Activated CD4-positive, alpha-beta memory T cell treated with anti-CD3 and anti-CD28 coated beads for 36 hours (primary cell): ENCODE measurements at regions of chr10 and their contacts with region 1.

Region 1: DNA sequence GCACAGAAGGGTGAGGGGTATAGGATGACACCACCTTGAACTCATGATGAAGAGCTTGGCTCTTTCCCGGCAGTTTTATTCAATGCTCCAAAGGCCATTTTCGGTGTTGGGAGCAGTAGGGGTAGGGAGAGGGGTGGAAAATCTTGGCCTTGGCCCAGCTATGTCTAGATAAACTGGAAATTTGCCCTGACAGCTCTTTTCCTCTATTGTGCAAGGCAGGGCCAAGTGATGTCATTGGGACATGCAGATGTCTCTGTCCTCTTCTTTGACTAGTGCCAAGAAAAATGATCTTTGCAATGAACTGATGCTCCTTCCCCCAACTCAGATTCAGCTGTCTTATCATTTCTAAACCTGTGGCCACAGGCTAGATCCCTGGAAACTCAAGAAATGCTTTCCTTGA is 27.7 kb upstream of the PRKCQ start:
- DNase-seq: no peak
- H3K4me3 Mint-ChIP-seq: peak overlapping the region; percentile 58
- H3K27ac Mint-ChIP-seq: peak overlapping the region; percentile 90
- H3K4me1 Mint-ChIP-seq: peaks cover 62% of the 10 kb centered on the region
- H3K27me3 Mint-ChIP-seq: no peaks in the 10 kb centered on the region

Region 2: DNA sequence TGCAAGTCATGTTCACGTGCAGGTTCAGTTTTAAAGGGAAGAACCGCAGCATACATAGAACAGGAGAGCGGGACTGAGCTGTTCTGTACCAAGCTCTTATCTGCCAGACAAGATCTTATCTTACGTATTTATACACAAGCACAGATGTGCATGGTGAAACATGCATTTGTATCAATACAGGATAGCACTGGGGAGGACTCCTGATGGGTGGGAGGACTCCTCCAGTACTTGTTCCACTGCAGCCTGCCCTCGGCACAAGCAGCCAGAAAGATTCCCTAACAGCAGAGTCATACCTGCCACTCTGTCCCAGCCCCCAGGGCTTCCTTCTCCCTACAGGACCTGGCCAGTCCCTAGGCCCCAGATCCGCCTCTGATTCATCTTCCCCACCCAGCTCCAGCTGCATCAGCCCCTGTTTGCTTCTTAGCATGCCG is 14.5 kb before region 1 on chr10:
- CTCF ChIA-PET with region 1: interaction called, 8 read pairs
- POLR2A ChIA-PET with region 1: interaction called, 6 read pairs
- intact Hi-C with region 1: loop called (anchors 1 kb)
- DNase-seq: peak; percentile 44
- H3K4me3 Mint-ChIP-seq: peak overlapping the region; percentile 14
- H3K27ac Mint-ChIP-seq: peak overlapping the region; percentile 72
- H3K4me1 Mint-ChIP-seq: peaks cover 90% of the 10 kb centered on the region
- H3K27me3 Mint-ChIP-seq: no peaks in the 10 kb centered on the region